ENCODE measurements at regions of chr11 and their contacts with region 1.

Region 1: GRCh38 chr11:96342961-96343711 is at the start of gene MAML2:
- DNase-seq: peak; percentile 93 to 96 (median 94)
- ATAC-seq: peak; percentile 89
- H3K4me3 ChIP-seq: peak within 1 kb of the TSS; percentile 70
- H3K27ac ChIP-seq: peak within 1 kb of the TSS; percentile 59
- H3K4me1 ChIP-seq: peaks cover 22 to 34% of the 10 kb centered on the region in 2 experiments
- H3K27me3 ChIP-seq: no peaks in the 10 kb centered on the region
- CTCF ChIP-seq: peak; percentile 85 to 99 (median 98)
- EP300 ChIP-seq: peak; percentile 54; the same call in 1 of the 2 replicates
- POLR2A ChIP-seq: no peak
- RAD21 ChIP-seq: peak; percentile 94
- polyA plus RNA-seq, gene MAML2: 0.79 to 1.5 TPM

Region 2: DNA sequence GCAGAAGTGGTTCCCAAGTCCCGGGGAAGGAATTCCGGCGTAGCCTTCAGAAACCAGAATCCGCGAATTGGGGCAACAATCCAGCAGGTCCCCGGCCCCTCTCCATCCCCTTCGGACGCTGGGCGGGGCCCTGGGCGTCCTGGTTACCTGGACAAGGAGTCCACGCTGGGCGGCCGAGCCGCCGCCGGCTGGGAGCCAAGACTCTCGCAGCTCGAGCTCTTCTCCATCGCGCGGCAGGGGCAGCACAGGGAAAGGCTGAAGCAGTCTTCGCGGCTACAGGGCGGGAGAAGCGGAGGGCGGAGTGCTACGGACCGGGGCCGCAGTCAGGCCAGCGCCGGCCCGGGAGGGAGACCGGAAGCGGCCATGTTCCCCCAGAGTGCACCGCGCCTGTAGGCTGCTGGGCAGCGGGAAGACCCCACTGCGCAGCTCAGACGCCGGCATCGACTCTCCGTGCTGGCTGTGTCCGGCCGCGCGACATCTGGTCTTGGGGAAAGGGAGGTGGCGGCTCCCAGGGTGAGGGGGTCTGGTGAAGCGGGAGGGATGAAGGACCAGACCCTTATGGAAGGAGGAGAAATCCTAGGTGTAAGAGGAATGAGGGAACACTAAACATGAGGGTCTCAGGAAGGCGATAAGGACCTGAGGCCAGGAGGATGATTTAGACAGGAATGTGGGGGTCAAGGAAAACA is 419.3 kb before region 1 on chr11 and contains the start of gene MTMR2:
- CTCF ChIA-PET with region 1: no interaction called
- POLR2A ChIA-PET with region 1: interaction called, 3 read pairs
- in situ Hi-C with region 1: no loop called
- intact Hi-C with region 1: loop called (anchors 10 kb)
- DNase-seq: peak; percentile 77 to 84 (median 81)
- ATAC-seq: peak; percentile 99
- H3K4me3 ChIP-seq: peak within 1 kb of the TSS; percentile 75
- H3K27ac ChIP-seq: peak within 1 kb of the TSS; percentile 84
- H3K4me1 ChIP-seq: peaks cover 6 to 10% of the 10 kb centered on the region in 2 experiments; a peak in 4 of 5 replicates
- H3K27me3 ChIP-seq: no peaks in the 10 kb centered on the region
- CTCF ChIP-seq: 0 out of 6 replicates have a peak, but pooled peaks of 1 of the 3 experiments have one; percentile 5
- EP300 ChIP-seq: no peak
- POLR2A ChIP-seq: peak; percentile 98
- RAD21 ChIP-seq: 0 out of 4 replicates have a peak, but pooled peaks have one; percentile 7 to 17
- polyA plus RNA-seq, gene MTMR2: 12.6 to 15.8 TPM

Region 3: DNA sequence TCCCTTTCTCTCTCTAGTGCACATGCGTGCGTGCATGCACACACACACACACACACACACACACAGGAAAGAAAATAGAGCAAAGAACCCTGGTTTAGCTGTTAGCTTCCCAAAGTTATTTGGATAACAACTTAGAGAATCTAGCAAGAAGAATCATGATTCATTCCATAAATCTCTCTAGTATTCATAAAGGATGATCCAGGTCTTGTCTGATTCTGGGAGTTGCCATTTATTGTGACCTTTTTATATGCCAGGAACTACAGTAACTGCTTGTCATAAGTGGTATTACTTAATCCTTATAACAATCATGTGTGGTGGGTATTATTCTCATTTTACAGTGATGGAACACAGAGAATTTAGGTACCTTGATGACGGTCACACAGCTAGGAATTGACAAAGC is 277.8 kb before region 1 on chr11:
- CTCF ChIA-PET with region 1: no interaction called
- POLR2A ChIA-PET with region 1: interaction called, 3 read pairs
- in situ Hi-C with region 1: loop called (anchors 5 kb)
- intact Hi-C with region 1: no loop called
- DNase-seq: no peak
- ATAC-seq: no peak
- H3K4me3 ChIP-seq: no peak overlapping the region
- H3K27ac ChIP-seq: no peak overlapping the region
- H3K4me1 ChIP-seq: peaks cover 3 to 5% of the 10 kb centered on the region in 2 experiments; a peak in 2 of 5 replicates
- H3K27me3 ChIP-seq: no peaks in the 10 kb centered on the region
- CTCF ChIP-seq: no peak
- EP300 ChIP-seq: no peak
- POLR2A ChIP-seq: no peak
- RAD21 ChIP-seq: no peak

Region 4: DNA sequence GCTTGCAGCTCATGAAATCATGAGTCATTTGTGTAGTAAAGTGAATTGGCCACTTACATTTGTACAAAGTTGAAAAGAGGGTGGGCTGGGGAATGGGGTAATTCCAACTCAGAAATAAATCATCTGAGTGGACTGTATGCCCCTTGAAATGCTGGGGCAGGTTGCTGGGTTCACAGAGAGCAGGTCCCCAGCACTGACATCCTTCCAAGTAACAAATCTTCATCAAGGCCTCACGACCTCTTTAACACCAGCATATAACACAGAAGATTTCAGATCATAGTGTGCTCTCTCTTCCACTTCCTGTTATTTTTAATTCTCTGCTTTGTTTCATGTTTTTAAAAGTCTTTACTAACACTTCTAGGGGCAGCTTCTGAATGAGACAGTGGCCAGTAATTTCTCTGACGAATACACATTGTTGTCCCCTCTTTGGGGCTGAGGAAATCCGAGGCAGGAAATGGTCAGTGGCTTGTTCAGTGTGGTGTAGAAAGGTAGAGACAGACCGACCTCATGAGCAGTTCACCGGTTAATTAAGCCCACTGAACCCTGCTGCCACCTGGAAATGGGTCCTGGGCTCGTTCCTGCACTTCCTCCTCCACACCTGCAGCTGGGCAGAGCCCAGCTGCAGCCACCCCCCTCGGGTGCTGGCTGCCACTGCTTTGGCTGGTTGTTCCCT is 127.9 kb before region 1 on chr11:
- CTCF ChIA-PET with region 1: no interaction called
- POLR2A ChIA-PET with region 1: no interaction called
- in situ Hi-C with region 1: no loop called
- intact Hi-C with region 1: loop called (anchors 2 kb)
- DNase-seq: peak in 2 of 4 experiments; percentile 16 to 20
- ATAC-seq: peak; percentile 22
- H3K4me3 ChIP-seq: no peak overlapping the region
- H3K27ac ChIP-seq: peak overlapping the region; percentile 50
- H3K4me1 ChIP-seq: peaks cover 9 to 63% of the 10 kb centered on the region in 2 experiments
- H3K27me3 ChIP-seq: no peaks in the 10 kb centered on the region
- CTCF ChIP-seq: no peak
- EP300 ChIP-seq: no peak
- POLR2A ChIP-seq: no peak
- RAD21 ChIP-seq: no peak

Region 5: DNA sequence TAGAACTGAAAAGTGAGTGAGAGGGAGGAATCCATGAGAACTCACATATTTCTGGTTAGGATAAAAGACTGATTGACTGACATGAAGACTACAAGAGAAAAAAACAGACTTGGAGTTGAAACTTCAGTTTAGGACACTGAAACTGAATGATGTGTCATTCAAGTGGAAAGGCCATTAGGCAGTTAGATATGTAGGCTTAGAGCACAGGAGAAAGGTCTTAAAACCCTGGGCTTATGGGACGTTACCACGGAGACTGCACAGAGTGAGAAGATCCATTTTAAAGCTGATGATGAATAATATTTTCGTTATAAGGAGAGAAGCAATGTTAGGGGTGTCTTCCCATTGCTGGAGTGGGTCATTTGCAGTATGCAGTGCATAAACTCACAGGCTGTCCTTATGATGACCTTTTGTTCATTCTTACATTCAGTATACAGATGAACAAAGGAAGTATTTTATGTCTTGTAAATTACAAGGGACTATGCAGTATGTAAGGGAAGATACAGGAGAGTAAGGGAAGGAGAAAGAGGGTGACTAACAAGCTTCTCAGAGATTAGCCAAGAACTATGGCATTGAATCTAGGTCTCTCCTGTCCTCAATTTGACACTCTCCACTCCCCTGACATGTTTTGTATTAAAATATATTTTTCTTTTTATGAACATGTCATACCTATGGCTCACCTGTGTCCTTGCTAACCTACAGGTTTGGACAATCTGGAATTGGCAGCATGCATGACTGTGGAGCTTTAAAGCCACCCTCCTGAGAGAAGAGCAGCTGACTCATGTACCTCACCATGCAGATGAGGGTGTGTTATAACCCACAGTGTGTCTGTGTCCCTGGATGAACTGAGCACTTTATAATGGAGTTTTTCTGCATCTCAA is 63.9 kb before region 1 on chr11:
- CTCF ChIA-PET with region 1: no interaction called
- POLR2A ChIA-PET with region 1: interaction called, 5 read pairs
- in situ Hi-C with region 1: no loop called
- intact Hi-C with region 1: loop called (anchors 5 kb)
- DNase-seq: peak in 2 of 4 experiments; percentile 59 to 66
- ATAC-seq: peak; percentile 91
- H3K4me3 ChIP-seq: no peak overlapping the region
- H3K27ac ChIP-seq: peak overlapping the region; percentile 62; the same call in 2 of the 3 replicates
- H3K4me1 ChIP-seq: peaks cover 4 to 44% of the 10 kb centered on the region in 2 experiments
- H3K27me3 ChIP-seq: no peaks in the 10 kb centered on the region
- CTCF ChIP-seq: no peak
- EP300 ChIP-seq: no peak; the same call in 1 of the 2 replicates
- POLR2A ChIP-seq: no peak
- RAD21 ChIP-seq: no peak

Region 6: GRCh38 chr11:96331699-96332116 is 11.4 kb before region 1 on chr11:
- CTCF ChIA-PET with region 1: interaction called, 3 read pairs
- POLR2A ChIA-PET with region 1: interaction called, 17 read pairs
- in situ Hi-C with region 1: no loop called
- intact Hi-C with region 1: no loop called
- DNase-seq: no peak
- ATAC-seq: peak; percentile 28
- H3K4me3 ChIP-seq: no peak overlapping the region
- H3K27ac ChIP-seq: peak overlapping the region; percentile 53; the same call in 2 of the 3 replicates
- H3K4me1 ChIP-seq: peaks cover 20 to 60% of the 10 kb centered on the region in 2 experiments; a peak in 4 of 5 replicates
- H3K27me3 ChIP-seq: no peaks in the 10 kb centered on the region
- CTCF ChIP-seq: no peak
- EP300 ChIP-seq: no peak
- POLR2A ChIP-seq: no peak
- RAD21 ChIP-seq: no peak